OCI-LY7 (cell line): ENCODE measurements at regions of chr12 and their contacts with region 1.

Region 1: DNA sequence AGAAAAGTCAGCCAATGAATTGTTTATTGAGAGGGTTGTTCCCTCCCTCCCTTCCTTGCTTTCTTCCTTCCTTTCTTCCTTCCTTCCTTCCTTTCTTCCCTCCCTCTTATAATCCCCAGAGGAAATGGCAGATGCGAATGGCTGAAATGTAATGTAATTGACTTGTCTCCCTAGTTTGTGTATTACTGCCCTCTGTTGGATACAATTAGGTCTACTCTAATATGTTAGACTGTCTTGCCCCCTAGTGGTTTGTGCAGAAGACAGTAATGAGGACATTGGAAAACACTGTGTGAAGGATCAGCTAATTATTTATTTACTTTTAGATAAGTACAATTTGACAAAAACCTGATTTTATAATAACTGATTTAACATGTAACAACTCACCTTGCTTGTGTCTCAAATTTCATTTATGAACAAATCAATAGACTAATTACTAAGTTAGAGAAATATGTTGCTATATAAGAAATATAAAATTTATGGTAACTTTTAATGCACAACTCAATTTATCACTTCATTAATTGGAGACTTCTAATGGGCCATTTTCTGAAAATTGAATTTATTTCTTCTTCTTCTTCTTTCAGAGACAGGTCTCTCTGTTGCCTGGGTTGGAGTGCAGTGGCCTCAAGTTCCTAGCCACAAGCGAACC is 229.8 kb upstream of the LRIG3 start:
- DNase-seq: peak; percentile 81
- H3K4me3 ChIP-seq: no peak overlapping the region
- H3K27ac ChIP-seq: no peak overlapping the region
- H3K4me1 ChIP-seq: no peaks in the 10 kb centered on the region
- CTCF ChIP-seq: peak; percentile 100

Region 2: GRCh38 chr12:58346032-58346632 is 804.0 kb before region 1 on chr12:
- CTCF ChIA-PET with region 1: no interaction called
- POLR2A ChIA-PET with region 1: no interaction called
- intact Hi-C with region 1: loop called (anchors 1 kb)
- DNase-seq: peak; percentile 45
- H3K4me3 ChIP-seq: no peak overlapping the region
- H3K27ac ChIP-seq: no peak overlapping the region
- H3K4me1 ChIP-seq: no peaks in the 10 kb centered on the region
- CTCF ChIP-seq: peak; percentile 95

Region 3: DNA sequence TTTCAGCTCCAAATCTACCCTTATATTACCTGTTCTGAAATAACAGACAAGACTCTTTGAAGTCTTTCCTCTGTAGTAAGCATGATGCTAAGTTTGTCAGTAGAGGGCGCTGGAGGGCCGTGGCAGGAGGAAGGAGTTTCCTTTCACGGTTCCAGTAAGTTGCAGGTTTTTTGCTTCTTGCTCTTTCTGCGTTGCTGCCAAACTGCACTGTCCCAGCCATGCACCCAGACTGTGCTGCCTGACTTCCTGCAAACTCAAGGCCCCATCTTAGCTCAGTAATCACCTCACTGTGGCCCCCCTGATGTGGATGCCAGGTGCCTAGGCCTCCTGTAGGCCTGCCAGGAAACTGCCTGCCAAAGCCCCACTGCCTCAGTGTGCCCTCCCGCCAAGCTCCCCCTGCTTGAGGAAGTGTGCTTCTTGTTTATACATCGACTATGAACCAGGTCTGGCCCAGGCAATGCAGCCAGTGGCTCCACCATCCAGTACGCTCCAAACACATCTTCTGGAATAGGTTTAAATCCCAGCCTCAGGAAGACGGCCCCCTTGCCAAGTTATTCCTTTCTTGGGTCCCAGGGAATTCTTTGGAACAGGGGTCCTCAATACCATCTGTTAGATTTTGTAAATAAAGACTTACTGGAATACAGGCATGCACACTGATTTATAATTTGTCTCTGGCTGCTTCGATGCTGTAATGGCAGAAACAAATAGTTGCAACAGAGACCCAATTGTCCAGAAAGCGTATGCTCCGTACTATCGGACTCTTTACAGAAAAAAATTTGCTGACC is 36.1 kb before region 1 on chr12:
- CTCF ChIA-PET with region 1: no interaction called
- POLR2A ChIA-PET with region 1: no interaction called
- intact Hi-C with region 1: loop called (anchors 2 kb)
- DNase-seq: peak; percentile 69
- H3K4me3 ChIP-seq: no peak overlapping the region
- H3K27ac ChIP-seq: no peak overlapping the region
- H3K4me1 ChIP-seq: no peaks in the 10 kb centered on the region
- CTCF ChIP-seq: peak; percentile 90